ENCODE measurements at regions of chr21 and their contacts with region 1.

Region 1: DNA sequence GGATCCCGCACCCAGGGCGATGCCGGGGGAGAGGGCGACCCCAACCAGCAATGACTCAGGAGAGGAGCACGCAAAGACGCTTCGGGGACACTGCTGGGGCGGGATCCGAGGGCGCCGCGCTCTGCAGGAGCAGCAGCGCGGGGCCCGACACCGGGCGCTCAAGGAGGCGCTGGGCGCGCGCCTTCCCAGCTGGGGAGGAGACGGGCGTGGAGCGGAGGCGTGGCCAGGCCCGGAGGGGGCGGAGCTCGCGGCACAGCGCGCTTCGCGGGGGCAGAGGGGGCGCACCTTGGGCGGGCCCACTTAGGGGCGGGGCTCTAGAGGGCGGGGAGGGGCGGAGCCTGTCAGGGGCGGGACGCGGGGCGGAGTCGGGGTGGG is 369 bp downstream of the SUMO3 start:
- DNase-seq: peak; percentile 93 to 98 (median 93)
- ATAC-seq: peak; percentile 90 to 98 (median 93)
- H3K4me3 ChIP-seq: peak overlapping the region; percentile 72 to 97 (median 88)
- H3K27ac ChIP-seq: peak overlapping the region; percentile 85 to 99 (median 96)
- H3K4me1 ChIP-seq: peaks cover 0 to 39% (median 24%) of the 10 kb centered on the region in 12 donors
- H3K27me3 ChIP-seq: no peaks in the 10 kb centered on the region
- CTCF ChIP-seq: no peak
- POLR2A ChIP-seq: no peak

Region 2: DNA sequence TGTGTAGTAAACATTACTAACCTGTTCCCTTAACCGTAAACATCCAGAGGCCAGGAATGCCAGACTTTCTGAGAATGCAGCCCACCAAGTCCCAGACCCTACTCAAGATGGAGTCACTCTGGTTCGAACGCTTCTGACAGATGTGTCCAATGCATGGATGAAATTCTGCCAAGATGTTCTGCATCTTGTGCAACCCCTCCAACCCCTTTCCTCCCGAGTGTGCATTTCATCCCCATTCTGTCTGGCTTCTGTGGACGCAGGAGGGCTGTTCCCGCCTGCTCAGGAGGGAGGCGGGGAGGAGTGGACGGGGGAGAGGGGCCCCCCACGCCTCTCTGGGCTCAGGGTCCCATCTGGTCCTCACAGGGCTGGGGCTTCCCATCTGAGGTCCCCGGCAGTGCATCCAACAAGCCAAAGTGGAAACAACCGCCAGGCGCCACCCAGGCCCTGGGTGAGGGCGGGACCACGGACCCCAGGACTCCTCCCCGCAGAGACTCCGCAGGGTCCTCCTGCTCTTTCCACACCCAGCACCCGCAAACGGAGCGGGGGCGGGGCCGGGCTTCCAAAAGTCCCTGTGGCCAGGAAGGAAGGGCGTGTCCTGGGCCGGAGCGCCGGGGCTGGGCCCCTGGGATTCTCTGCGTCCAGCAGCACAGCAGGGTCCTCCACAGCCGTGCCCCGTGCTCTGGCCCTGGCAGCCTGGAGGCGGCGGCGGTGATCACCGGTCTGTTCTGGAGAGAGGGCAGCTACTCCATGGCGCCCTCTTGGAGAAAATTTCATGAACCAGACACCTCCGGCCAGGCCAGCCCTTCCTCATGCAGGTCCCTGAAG is 28.1 kb after region 1 on chr21:
- intact Hi-C with region 1: loop called in 4 of 10 experiments (anchors 2 to 5 kb)
- DNase-seq: peak; percentile 74 to 89 (median 81)
- ATAC-seq: peak; percentile 48 to 88 (median 76)
- H3K4me3 ChIP-seq: peak overlapping the region in 10 of 12 donors; percentile 10 to 58 (median 48)
- H3K27ac ChIP-seq: peak overlapping the region in 10 of 12 donors; percentile 12 to 63 (median 46)
- H3K4me1 ChIP-seq: peaks cover 0 to 35% (median 22%) of the 10 kb centered on the region in 12 donors
- H3K27me3 ChIP-seq: no peaks in the 10 kb centered on the region
- CTCF ChIP-seq: peak in 8 of 12 donors; percentile 21 to 53 (median 40)
- POLR2A ChIP-seq: no peak

Region 3: GRCh38 chr21:44854664-44855446 is 37.4 kb after region 1 on chr21:
- intact Hi-C with region 1: loop called in 2 of 10 experiments (anchors 5 kb)
- DNase-seq: no peak
- ATAC-seq: peak in 1 of 4 donors; percentile 6
- H3K4me3 ChIP-seq: no peak overlapping the region
- H3K27ac ChIP-seq: peak overlapping the region in 6 of 12 donors; percentile 29 to 58 (median 40)
- H3K4me1 ChIP-seq: peaks cover 4 to 55% (median 24%) of the 10 kb centered on the region in 12 donors
- H3K27me3 ChIP-seq: no peaks in the 10 kb centered on the region
- CTCF ChIP-seq: no peak
- POLR2A ChIP-seq: no peak

Region 4: GRCh38 chr21:44939532-44940115 is 122.1 kb after region 1 on chr21 and contains the start of gene SLX9:
- intact Hi-C with region 1: loop called in 3 of 10 experiments (anchors 5 kb)
- DNase-seq: peak; percentile 72 to 90 (median 83)
- ATAC-seq: peak; percentile 58 to 92 (median 87)
- H3K4me3 ChIP-seq: peak within 1 kb of the TSS; percentile 74 to 99 (median 82)
- H3K27ac ChIP-seq: peak within 1 kb of the TSS; percentile 9 to 88 (median 78)
- H3K4me1 ChIP-seq: peaks cover 0 to 37% (median 29%) of the 10 kb centered on the region in 12 donors
- H3K27me3 ChIP-seq: peaks cover 0 to 5% (median 0%) of the 10 kb centered on the region in 9 donors
- CTCF ChIP-seq: no peak
- POLR2A ChIP-seq: peak in 1 of 2 donors; percentile 70
- total RNA-seq, gene SLX9: 38.5 to 53.1 (median 47.1) TPM